Body of pancreas (tissue), 4 donors: ENCODE measurements at regions of chr3 and their contacts with region 1.

Region 1: DNA sequence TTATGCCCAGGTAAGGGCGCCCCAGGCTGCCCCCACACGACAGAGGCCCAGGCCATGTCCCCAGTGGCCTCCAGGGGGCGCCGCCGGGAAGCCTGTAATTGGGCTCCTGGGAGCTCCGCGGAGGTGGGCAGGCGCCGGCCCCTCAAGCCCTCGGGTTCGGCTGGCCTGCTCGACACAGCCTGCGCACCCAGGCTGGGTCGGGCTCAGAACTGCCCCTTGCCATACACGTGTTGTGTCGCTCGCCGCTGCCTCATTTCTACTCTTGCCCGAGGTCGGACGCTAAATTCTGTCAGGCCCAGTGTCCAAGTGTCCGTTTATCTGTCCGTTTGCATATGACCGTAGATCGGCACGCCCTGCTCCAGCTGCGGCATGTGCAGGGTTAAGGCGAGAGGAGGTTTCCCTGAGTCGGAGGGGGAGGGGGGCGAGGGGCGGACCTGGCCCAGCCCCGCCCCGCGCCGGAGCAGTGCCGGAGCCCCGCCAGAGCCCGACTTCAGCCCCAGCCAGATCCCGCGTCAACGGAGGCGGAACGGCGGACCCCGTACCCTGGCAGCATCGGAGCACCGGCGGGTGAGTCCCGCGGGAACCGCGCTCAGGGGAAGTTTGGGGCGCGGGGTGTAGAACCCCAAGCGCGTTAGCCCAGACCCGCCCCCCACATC is at the start of gene KLHDC8B:
- DNase-seq: peak; percentile 83 to 86 (median 84)
- ATAC-seq: peak; percentile 90
- H3K4me3 ChIP-seq: peak within 1 kb of the TSS; percentile 51 to 69
- H3K27ac ChIP-seq: peak within 1 kb of the TSS; percentile 39 to 81 (median 59)
- H3K4me1 ChIP-seq: peaks cover 43% of the 10 kb centered on the region
- H3K27me3 ChIP-seq: no peaks in the 10 kb centered on the region
- CTCF ChIP-seq: peak; percentile 76 to 89 (median 79)
- POLR2A ChIP-seq: peak; percentile 26 to 52 (median 46)
- total RNA-seq, gene KLHDC8B: 19.5 to 22.1 TPM

Region 2: DNA sequence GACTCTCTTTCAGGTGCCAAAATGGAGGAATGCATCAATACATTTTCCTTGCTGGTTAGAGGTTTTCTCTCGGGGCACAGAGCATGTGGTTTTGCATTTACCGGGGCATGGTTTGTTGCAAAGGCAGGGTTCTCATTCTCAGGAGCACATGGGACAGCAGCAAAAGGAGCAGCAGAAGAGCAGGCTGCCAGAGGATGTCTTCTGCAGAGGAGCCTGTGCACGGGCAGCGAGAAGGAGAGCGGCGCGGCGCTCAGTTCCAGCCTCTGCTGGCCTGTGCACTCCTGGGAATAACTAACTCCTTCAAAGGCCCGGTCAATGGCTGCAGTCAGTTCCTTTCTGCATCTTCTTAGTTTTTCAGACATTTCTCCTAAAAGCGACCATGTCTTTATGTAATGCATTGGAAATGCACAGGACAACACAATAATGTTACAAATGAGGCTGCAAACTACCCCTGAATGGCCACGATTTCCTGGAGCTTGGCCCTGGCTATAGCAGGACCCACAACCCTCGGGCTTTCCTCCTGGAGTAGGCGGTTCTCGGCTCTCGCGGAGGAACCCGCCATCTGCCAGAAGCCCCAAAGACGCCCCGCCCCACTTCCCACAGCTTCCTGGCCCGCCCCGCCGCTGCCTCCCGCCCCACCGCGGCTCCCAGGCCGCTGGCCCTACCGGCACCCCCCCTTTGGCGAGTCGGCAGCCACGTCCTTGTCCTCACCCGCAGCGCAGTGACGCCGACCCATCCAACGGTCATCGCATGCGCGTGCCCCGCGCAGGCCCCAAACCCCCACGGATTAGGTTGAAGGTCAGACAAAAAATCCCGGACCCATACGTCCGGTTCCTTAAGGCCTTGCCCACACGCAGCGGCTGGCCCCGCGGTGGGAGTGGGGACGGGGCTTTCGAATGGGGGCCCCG is 105.5 kb after region 1 on chr3 and contains the start of gene C3orf62:
- intact Hi-C with region 1: loop called (anchors 10 kb)
- DNase-seq: peak; percentile 90 to 93 (median 92)
- ATAC-seq: peak; percentile 93
- H3K4me3 ChIP-seq: peak within 1 kb of the TSS in 1 of 2 donors; percentile 15
- H3K27ac ChIP-seq: peak within 1 kb of the TSS; percentile 81 to 94 (median 88)
- H3K4me1 ChIP-seq: peaks cover 20% of the 10 kb centered on the region
- H3K27me3 ChIP-seq: no peaks in the 10 kb centered on the region
- CTCF ChIP-seq: no peak
- POLR2A ChIP-seq: peak; percentile 29 to 71 (median 69)
- total RNA-seq, gene C3orf62: 4.9 TPM